GM12878 (cell line): ENCODE measurements at regions of chr14 and their contacts with region 1.

Region 1: GRCh38 chr14:103949131-103949790 is 6.9 kb upstream of the RD3L start:
- DNase-seq: no peak
- ATAC-seq: no peak
- H3K4me3 ChIP-seq: no peak overlapping the region
- H3K27ac ChIP-seq: no peak overlapping the region
- H3K4me1 ChIP-seq: no peaks in the 10 kb centered on the region
- H3K27me3 ChIP-seq: peaks cover 0 to 4% of the 10 kb centered on the region in 2 experiments; a peak in 1 of 4 replicates
- CTCF ChIP-seq: no peak
- EP300 ChIP-seq: no peak
- POLR2A ChIP-seq: no peak
- RAD21 ChIP-seq: no peak

Region 2: GRCh38 chr14:103483600-103483999 is 465.7 kb before region 1 on chr14:
- CTCF ChIA-PET with region 1: no interaction called
- POLR2A ChIA-PET with region 1: interaction called, 12 read pairs
- RAD21 ChIA-PET with region 1: no interaction called
- SMC1A ChIA-PET with region 1: no interaction called
- in situ Hi-C with region 1: no loop called
- intact Hi-C with region 1: no loop called
- DNase-seq: no peak
- ATAC-seq: no peak
- H3K4me3 ChIP-seq: no peak overlapping the region
- H3K27ac ChIP-seq: no peak overlapping the region
- H3K4me1 ChIP-seq: peaks cover 9% of the 10 kb centered on the region
- H3K27me3 ChIP-seq: no peaks in the 10 kb centered on the region
- CTCF ChIP-seq: no peak
- EP300 ChIP-seq: no peak
- POLR2A ChIP-seq: no peak
- RAD21 ChIP-seq: no peak

Region 3: DNA sequence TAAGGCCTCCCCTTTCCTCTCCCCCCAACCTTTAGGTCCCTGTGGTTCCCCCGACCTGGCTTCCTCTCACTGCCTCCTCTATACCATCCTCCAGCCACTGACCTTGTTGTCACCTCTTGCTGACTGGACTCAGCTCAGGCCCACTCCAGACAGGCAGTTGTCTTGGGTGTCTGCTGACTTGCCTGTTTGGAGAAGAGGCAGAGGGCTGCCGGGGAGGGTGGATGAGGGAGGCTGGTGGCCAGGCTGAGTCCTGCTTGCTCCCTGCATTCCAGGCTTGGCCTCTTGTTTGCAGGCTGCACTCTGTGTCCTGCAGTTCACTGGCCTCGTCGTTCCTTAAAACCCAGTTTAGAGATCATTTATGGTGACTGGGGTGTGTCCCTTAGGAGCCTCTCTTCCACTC is 24.1 kb after region 1 on chr14:
- CTCF ChIA-PET with region 1: no interaction called
- POLR2A ChIA-PET with region 1: no interaction called
- RAD21 ChIA-PET with region 1: no interaction called
- SMC1A ChIA-PET with region 1: no interaction called
- in situ Hi-C with region 1: no loop called
- intact Hi-C with region 1: no loop called
- DNase-seq: no peak
- ATAC-seq: no peak
- H3K4me3 ChIP-seq: no peak overlapping the region
- H3K27ac ChIP-seq: no peak overlapping the region
- H3K4me1 ChIP-seq: no peaks in the 10 kb centered on the region
- H3K27me3 ChIP-seq: no peaks in the 10 kb centered on the region
- CTCF ChIP-seq: no peak
- EP300 ChIP-seq: no peak
- POLR2A ChIP-seq: no peak
- RAD21 ChIP-seq: no peak